Mammary epithelial cell (primary cell): ENCODE measurements at regions of chr10 and their contacts with region 1.

Region 1: DNA sequence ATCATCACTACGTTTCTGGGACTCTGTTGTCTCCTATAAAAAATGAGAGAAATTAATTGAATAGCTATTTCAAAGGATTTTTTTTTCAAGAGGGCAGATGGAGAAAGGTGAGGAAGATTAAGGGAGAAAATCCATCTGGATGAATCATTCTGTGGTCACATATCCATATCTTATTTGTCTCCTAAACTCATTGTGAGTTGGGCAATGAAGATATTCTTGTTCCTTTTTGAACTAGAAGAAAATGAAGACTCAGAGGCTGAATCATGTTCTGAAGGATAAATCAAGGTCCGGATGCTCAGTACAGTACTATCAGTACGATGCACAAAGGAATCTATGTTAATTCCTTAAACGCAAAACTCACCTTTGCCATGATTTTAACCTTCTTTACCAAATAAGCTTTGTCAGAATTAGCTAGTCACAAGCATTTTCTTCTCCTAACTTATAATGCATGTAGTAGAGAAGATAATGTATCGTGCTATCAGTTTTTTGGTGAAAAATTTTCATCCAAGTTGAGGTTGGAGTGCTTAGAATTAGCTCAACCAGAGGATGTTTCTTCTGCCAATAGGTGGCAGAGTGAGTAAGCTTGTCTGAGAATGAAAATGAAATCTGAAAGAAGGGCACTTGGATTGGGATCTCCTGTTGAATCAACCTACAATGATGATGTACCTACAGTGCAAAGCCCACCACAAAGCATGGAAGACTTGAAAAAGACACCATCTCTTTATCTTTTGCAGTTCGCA is 446.9 kb downstream of the KIF20B start:
- DNase-seq: peak; percentile 78
- H3K4me3 ChIP-seq: no peak overlapping the region
- H3K27ac ChIP-seq: peak overlapping the region; percentile 4
- H3K4me1 ChIP-seq: peaks cover 24% of the 10 kb centered on the region
- H3K27me3 ChIP-seq: no peaks in the 10 kb centered on the region
- CTCF ChIP-seq: peak; percentile 57 to 74

Region 2: GRCh38 chr10:89805599-89806013 is 342.7 kb before region 1 on chr10:
- CTCF ChIA-PET with region 1: no interaction called
- dilution Hi-C with region 1: no loop called
- in situ Hi-C with region 1: loop called in 1 of 2 experiments (anchors 25 kb)
- intact Hi-C with region 1: no loop called
- DNase-seq: no peak
- H3K4me3 ChIP-seq: no peak overlapping the region
- H3K27ac ChIP-seq: no peak overlapping the region
- H3K4me1 ChIP-seq: no peaks in the 10 kb centered on the region
- H3K27me3 ChIP-seq: no peaks in the 10 kb centered on the region
- CTCF ChIP-seq: no peak

Region 3: GRCh38 chr10:90167174-90168064 is 19.1 kb after region 1 on chr10:
- CTCF ChIA-PET with region 1: no interaction called
- dilution Hi-C with region 1: no loop called
- in situ Hi-C with region 1: no loop called
- intact Hi-C with region 1: loop called (anchors 1 kb)
- DNase-seq: peak; percentile 74
- H3K4me3 ChIP-seq: no peak overlapping the region
- H3K27ac ChIP-seq: no peak overlapping the region
- H3K4me1 ChIP-seq: peaks cover 12% of the 10 kb centered on the region
- H3K27me3 ChIP-seq: no peaks in the 10 kb centered on the region
- CTCF ChIP-seq: no peak

Region 4: GRCh38 chr10:90193240-90193985 is 45.1 kb after region 1 on chr10:
- CTCF ChIA-PET with region 1: no interaction called
- dilution Hi-C with region 1: no loop called
- in situ Hi-C with region 1: no loop called
- intact Hi-C with region 1: no loop called
- DNase-seq: peak; percentile 83
- H3K4me3 ChIP-seq: no peak overlapping the region
- H3K27ac ChIP-seq: no peak overlapping the region
- H3K4me1 ChIP-seq: peaks cover 26% of the 10 kb centered on the region
- H3K27me3 ChIP-seq: no peaks in the 10 kb centered on the region
- CTCF ChIP-seq: no peak

Region 5: GRCh38 chr10:90437452-90437851 is 289.2 kb after region 1 on chr10:
- CTCF ChIA-PET with region 1: no interaction called
- dilution Hi-C with region 1: no loop called
- in situ Hi-C with region 1: no loop called
- intact Hi-C with region 1: loop called (anchors 10 kb)
- DNase-seq: peak; percentile 31
- H3K4me3 ChIP-seq: no peak overlapping the region
- H3K27ac ChIP-seq: no peak overlapping the region
- H3K4me1 ChIP-seq: no peaks in the 10 kb centered on the region
- H3K27me3 ChIP-seq: no peaks in the 10 kb centered on the region
- CTCF ChIP-seq: peak in 1 of 2 donors; percentile 41

Region 6: DNA sequence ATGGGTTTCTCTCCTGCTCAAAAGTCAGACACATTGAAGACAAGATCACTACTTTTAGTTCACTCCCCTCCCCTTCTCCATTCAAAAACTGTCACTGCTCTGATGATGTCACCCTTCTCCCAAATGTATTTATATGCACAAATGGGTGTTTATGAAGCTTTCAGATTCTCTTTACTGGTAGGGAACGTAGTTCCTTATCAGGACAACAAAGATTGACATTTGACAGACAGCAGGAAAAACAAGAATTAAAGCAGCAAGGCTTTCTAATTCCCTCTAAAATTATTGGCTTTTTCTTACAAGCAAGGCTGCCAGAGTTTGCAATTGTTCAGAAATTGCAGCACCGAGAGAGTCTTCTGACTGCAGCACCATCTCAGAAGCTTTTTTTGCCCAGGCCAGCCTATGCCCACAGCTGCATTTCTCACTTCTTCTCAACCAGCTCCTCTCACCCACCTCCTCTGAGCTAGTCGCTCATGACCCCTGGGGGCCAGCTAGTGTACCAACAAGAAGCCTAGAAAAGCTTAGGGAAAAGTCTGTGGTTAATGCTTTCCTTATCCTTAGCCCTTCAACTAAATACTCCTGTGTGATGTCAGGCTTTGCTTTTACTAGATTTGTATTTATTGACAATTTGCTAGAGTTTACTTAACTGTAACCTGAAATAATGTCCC is 444.5 kb after region 1 on chr10:
- CTCF ChIA-PET with region 1: interaction called, 9 read pairs
- dilution Hi-C with region 1: no loop called
- in situ Hi-C with region 1: loop called in 1 of 2 experiments (anchors 25 kb)
- intact Hi-C with region 1: loop called (anchors 1 kb)
- DNase-seq: peak; percentile 62
- H3K4me3 ChIP-seq: no peak overlapping the region
- H3K27ac ChIP-seq: no peak overlapping the region
- H3K4me1 ChIP-seq: peaks cover 4% of the 10 kb centered on the region
- H3K27me3 ChIP-seq: no peaks in the 10 kb centered on the region
- CTCF ChIP-seq: peak; percentile 63 to 79

Region 7: DNA sequence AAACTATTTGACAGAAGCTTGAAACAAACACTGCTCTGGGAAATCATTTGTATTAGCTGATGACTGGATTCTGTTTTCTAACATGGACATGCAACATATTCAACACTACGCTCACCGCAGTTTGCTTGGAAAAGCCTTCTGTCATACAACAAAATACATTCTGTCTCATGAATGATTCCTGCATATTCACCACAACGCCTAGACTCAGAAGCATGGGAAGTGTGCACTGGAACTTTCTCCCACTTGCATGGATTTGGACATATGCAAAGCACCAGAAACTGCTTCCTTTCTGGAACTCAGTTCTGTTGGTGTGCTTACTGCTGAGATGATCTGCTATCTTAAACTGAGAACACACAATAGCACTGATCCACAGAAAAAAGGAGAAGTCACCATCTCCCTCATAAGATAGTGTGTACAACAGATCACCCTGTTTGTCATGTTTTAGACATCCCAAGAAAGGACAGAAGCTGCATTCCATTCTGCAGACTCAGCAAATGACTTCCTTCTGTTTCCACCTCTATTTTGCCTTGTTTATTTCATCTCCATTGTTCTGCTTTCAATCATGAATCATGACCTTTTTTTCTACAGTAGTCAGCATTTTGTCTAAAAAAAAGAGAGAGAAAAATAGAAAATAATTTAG is 593.8 kb after region 1 on chr10:
- CTCF ChIA-PET with region 1: no interaction called
- dilution Hi-C with region 1: no loop called
- in situ Hi-C with region 1: no loop called
- intact Hi-C with region 1: loop called (anchors 1 kb)
- DNase-seq: peak; percentile 43
- H3K4me3 ChIP-seq: no peak overlapping the region
- H3K27ac ChIP-seq: no peak overlapping the region
- H3K4me1 ChIP-seq: peaks cover 23% of the 10 kb centered on the region
- H3K27me3 ChIP-seq: no peaks in the 10 kb centered on the region
- CTCF ChIP-seq: no peak